Activated naive CD4-positive, alpha-beta T cell treated with anti-CD3 and anti-CD28 coated beads, Interleukin-2, amount 10 ng/mL, durations not matched to agents 7 days and 5 days (primary cell): ENCODE measurements at regions of chr15 and their contacts with region 1.

Region 1: GRCh38 chr15:40274350-40275274 is 8.3 kb downstream of the ANKRD63 start:
- DNase-seq: peak; percentile 90
- H3K4me3 Mint-ChIP-seq: no peak overlapping the region
- H3K27ac Mint-ChIP-seq: peak overlapping the region; percentile 72
- H3K4me1 Mint-ChIP-seq: peaks cover 5% of the 10 kb centered on the region
- H3K27me3 Mint-ChIP-seq: peaks cover 59% of the 10 kb centered on the region

Region 2: GRCh38 chr15:40038638-40039543 is 235.7 kb before region 1 on chr15 and contains the start of gene SRP14:
- CTCF ChIA-PET with region 1: interaction called, 172 read pairs
- DNase-seq: peak; percentile 96
- H3K4me3 Mint-ChIP-seq: peak within 1 kb of the TSS; percentile 95
- H3K27ac Mint-ChIP-seq: peak within 1 kb of the TSS; percentile 95
- H3K4me1 Mint-ChIP-seq: peaks cover 49% of the 10 kb centered on the region
- H3K27me3 Mint-ChIP-seq: no peaks in the 10 kb centered on the region

Region 3: DNA sequence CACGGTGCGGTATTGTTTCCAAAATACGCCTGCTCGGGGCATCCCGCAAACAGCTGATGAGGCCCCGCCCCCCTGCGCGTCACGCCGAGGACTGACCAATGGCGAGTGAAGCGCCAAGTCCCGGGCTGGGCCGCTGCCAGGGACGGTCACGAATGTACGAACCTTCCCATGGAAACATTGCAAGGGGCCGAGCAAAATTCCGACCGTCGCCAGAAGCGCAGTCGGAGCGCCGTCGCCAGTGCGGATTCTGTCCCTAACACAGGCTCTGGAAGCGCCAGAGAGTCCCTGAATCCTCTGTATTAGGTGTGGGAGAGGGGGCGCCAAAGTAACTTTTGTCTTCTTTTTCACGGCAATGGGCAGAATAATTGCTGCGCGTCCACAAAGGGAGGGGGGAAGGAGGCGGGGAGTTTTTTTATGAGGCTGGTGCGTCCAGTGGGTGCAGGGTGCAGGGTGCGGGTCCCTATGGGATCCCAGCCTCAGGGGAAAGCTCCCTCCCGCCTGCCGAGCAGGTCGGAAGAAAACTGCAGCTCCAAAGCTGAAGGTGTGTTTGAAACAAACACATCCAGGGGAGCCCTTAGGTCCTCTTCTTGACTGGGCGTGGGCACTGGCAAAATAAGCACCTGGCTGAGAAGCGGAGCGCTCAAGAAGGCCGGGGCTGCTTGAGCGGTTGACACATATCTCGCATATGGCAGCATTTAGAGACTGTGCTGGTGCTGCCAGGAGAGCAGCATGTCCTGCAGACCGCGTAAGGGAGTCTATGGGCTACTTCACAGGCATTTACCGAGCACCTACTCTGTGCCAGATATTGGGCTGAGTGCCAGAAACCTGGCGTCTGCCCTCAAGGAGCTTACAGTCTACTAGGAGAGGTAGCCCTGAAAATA is 165.5 kb before region 1 on chr15 and contains the start of gene BMF:
- CTCF ChIA-PET with region 1: interaction called, 16 read pairs
- DNase-seq: peak; percentile 99
- H3K4me3 Mint-ChIP-seq: peak within 1 kb of the TSS; percentile 90
- H3K27ac Mint-ChIP-seq: peak within 1 kb of the TSS; percentile 84
- H3K4me1 Mint-ChIP-seq: peaks cover 53% of the 10 kb centered on the region
- H3K27me3 Mint-ChIP-seq: peaks cover 64% of the 10 kb centered on the region

Region 4: GRCh38 chr15:40175160-40175559 is 99.5 kb before region 1 on chr15:
- CTCF ChIA-PET with region 1: no interaction called
- DNase-seq: no peak
- H3K4me3 Mint-ChIP-seq: no peak overlapping the region
- H3K27ac Mint-ChIP-seq: no peak overlapping the region
- H3K4me1 Mint-ChIP-seq: peaks cover 9% of the 10 kb centered on the region
- H3K27me3 Mint-ChIP-seq: no peaks in the 10 kb centered on the region

Region 5: GRCh38 chr15:40238532-40239403 is 35.8 kb before region 1 on chr15 and contains the start of gene PAK6:
- CTCF ChIA-PET with region 1: interaction called, 26 read pairs
- DNase-seq: peak; percentile 45
- H3K4me3 Mint-ChIP-seq: no peak within 1 kb of the TSS
- H3K27ac Mint-ChIP-seq: no peak within 1 kb of the TSS
- H3K4me1 Mint-ChIP-seq: peaks cover 16% of the 10 kb centered on the region
- H3K27me3 Mint-ChIP-seq: peaks cover 60% of the 10 kb centered on the region

Region 6: GRCh38 chr15:40290918-40291574 is 16.4 kb after region 1 on chr15:
- CTCF ChIA-PET with region 1: interaction called, 22 read pairs
- DNase-seq: no peak
- H3K4me3 Mint-ChIP-seq: no peak overlapping the region
- H3K27ac Mint-ChIP-seq: no peak overlapping the region
- H3K4me1 Mint-ChIP-seq: no peaks in the 10 kb centered on the region
- H3K27me3 Mint-ChIP-seq: no peaks in the 10 kb centered on the region

Region 7: DNA sequence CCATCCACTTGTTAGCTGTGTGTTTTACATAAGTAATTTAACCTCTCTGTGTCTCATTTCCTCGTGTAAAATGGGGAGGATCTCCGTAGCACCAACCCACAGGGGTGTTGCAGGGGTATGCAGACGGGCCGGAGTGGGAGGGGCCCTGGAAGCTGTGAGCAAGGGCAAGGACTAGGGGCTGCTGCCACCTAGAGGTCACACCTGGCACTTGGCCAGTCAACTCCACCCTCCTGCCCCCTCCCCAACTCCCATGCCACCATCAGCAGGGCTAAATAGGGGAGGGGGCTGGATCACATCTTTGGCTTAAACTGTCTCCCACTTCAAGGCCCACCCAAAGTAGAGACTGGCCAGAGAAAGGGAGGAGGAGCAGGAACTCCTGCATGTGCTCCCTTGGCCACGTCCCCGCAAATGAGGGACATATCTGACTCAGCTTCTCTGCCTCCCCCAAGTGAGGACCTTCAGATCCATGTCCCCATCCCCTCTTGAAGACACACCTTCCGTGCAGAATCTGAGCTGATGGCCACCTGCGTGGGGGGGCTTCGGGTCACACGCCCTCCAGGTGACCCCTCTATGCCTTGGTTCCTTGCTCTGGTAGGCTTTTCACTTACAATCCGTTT is 63.5 kb after region 1 on chr15:
- CTCF ChIA-PET with region 1: interaction called, 209 read pairs
- DNase-seq: peak; percentile 87
- H3K4me3 Mint-ChIP-seq: no peak overlapping the region
- H3K27ac Mint-ChIP-seq: peak overlapping the region; percentile 33
- H3K4me1 Mint-ChIP-seq: peaks cover 27% of the 10 kb centered on the region
- H3K27me3 Mint-ChIP-seq: peaks cover 7% of the 10 kb centered on the region